Heart right ventricle (tissue), 16 donors: ENCODE measurements at regions of chr11 and their contacts with region 1.

Region 1: GRCh38 chr11:63838678-63839507 is at the start of gene MARK2:
- DNase-seq: peak; percentile 98 to 99
- ATAC-seq: peak; percentile 90 to 96 (median 94)
- H3K4me3 ChIP-seq: peak within 1 kb of the TSS; percentile 54 to 97 (median 92)
- H3K27ac ChIP-seq: peak within 1 kb of the TSS; percentile 70 to 95 (median 86)
- H3K4me1 ChIP-seq: peaks cover 17 to 59% (median 53%) of the 10 kb centered on the region in 9 donors
- H3K27me3 ChIP-seq: no peaks in the 10 kb centered on the region
- CTCF ChIP-seq: no peak
- total RNA-seq, gene MARK2: 33.8 to 42.7 (median 39.0) TPM

Region 2: GRCh38 chr11:63859011-63859550 is 20.2 kb after region 1 on chr11:
- intact Hi-C with region 1: no loop called
- DNase-seq: no peak
- ATAC-seq: peak in 4 of 8 donors; percentile 45 to 69 (median 59)
- H3K4me3 ChIP-seq: no peak overlapping the region
- H3K27ac ChIP-seq: peak overlapping the region in 7 of 10 donors; percentile 2 to 66 (median 37)
- H3K4me1 ChIP-seq: peaks cover 0 to 66% (median 25%) of the 10 kb centered on the region in 9 donors
- H3K27me3 ChIP-seq: no peaks in the 10 kb centered on the region
- CTCF ChIP-seq: no peak

Region 3: DNA sequence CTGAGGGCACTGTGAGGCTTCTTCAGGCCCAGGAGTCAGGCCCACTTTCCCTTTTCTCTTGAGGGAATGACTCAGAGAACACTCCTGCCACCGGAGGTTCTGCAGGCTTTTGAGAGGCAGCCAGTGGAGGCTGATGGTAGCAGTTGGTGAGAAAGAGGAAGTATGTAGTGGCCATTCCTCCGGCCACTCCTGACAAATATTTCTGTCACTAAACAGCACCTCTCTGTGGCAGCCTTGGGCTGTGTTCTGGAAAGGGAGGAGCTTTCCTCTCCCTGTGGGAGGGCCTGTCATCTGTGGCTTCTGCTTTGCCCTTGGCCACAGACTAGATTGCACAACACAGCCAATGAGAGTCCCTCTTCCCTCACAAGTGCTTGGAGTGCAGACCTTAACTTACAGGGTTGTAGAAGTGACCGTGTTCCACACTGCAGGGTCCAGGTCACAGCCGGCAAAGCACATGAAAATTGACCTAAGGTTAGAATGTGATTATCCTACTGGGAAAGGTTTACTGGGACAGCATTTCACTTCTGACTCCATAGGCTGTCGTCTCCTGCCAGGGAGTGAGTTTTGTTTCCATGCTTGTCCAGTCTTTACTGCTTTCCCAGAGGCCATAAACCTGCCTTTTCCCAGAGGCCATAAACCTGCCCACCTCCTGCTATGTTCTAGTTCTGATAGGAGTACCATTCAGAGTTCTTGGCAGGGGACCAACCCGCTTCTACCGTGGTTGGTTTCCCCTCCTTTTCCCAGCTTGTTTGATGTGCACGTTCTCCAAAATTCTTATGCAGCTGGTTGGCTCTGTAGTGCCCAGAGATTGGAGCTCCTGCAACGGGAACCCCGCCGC is 33.3 kb after region 1 on chr11:
- intact Hi-C with region 1: loop called in 7 of 10 experiments (anchors 1 to 5 kb)
- DNase-seq: peak; percentile 55 to 89
- ATAC-seq: peak; percentile 92 to 97 (median 96)
- H3K4me3 ChIP-seq: peak overlapping the region in 4 of 10 donors; percentile 5 to 27 (median 12)
- H3K27ac ChIP-seq: peak overlapping the region; percentile 25 to 90 (median 79)
- H3K4me1 ChIP-seq: peaks cover 35 to 97% (median 88%) of the 10 kb centered on the region in 9 donors
- H3K27me3 ChIP-seq: no peaks in the 10 kb centered on the region
- CTCF ChIP-seq: peak in 8 of 9 donors; percentile 30 to 78 (median 56)

Region 4: DNA sequence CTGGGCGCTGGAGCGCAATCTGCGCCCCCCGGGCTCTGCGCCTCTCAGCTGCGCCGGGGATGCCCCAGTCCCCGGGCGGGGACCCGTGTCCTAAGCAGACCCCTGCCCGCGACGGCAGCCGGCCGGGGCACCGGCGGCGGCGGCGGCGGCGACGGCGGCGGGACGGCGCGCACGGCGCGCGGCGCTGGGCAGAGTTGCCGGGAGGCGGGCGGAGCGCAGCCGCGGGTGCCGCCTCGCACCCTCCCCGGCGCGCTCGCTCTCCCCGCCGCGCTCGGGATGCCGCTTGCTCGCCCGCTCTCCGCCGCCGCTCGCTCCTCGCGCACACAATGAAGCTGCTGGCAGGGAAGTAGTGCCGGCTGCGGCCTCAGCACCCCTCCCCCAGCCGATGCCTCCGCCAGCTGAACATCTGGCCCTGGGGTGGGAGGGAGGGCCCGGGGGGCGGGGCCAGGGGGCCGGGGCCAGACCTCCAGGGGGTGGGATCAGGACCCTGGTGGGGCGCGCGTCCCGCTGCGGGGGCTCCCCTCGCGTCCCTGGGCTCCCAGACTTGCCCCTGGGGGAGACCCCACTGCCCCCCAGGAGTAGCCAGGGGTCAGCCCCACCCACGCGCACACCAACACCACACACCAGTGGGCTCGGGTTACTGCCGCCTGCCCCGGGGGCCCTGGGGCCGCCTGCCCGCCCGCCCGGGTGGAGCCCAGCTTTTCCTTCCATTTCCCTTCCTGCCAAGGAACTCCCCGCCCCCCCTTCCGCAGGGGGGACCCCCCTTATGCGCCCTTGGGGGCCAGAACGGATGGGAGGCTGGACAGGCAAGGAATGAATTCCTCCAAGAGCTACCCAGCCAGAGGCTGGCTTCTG is 78.2 kb after region 1 on chr11 and contains the start of gene RCOR2:
- intact Hi-C with region 1: loop called in 1 of 10 experiments (anchors 5 kb)
- DNase-seq: peak; percentile 83 to 86
- ATAC-seq: peak; percentile 24 to 50 (median 38)
- H3K4me3 ChIP-seq: peak within 1 kb of the TSS; percentile 39 to 67 (median 60)
- H3K27ac ChIP-seq: peak within 1 kb of the TSS; percentile 83 to 97 (median 94)
- H3K4me1 ChIP-seq: peaks cover 39 to 61% (median 54%) of the 10 kb centered on the region in 9 donors
- H3K27me3 ChIP-seq: peaks cover 0 to 47% (median 0%) of the 10 kb centered on the region in 7 donors
- CTCF ChIP-seq: no peak
- total RNA-seq, gene RCOR2: 1.1 to 8.4 (median 5.0) TPM

Region 5: DNA sequence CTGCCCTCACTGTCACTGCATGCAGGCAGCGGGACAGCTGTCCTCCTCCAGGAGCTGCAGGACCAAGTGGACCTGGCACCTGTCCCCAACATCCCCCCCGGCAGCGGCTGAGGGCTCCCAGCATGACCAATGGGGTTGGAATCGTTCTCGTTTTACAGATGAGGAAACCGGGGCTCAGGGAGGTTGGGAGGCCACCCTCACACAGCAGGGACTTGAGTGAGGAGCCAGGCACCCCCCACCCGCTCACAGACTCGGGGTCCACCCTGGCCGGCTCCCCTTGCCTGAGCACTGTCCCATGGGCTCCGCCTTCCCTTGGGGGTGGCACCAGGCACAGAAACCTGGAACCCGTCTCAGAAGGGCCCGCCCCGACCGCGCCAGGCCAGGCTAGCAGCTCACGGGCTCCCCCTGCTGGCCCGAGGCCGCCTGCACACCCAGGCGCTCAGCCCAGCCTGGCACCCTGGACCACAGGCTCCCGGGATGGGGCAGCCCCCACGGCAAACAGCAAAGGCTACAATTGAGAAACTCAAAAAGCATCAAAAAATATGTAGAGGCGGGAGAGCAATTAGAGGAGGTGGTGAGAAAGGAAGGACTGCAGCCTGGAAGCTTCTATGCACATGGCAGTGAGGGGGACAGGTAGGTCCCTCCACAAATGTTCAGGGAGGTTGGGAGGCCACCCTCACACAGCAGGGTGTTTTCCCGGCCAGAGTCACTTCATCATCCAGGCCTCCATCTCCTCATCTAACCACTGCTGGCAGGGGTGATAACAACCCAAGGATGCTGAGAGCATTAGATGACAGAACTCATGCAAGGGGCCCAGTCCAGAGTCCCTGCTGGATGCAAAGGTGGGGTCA is 314.2 kb after region 1 on chr11:
- intact Hi-C with region 1: loop called in 9 of 10 experiments (anchors 1 to 5 kb)
- DNase-seq: peak; percentile 37 to 72
- ATAC-seq: peak; percentile 24 to 62 (median 48)
- H3K4me3 ChIP-seq: peak overlapping the region in 1 of 10 donors; percentile 17
- H3K27ac ChIP-seq: no peak overlapping the region
- H3K4me1 ChIP-seq: peaks cover 8 to 70% (median 37%) of the 10 kb centered on the region in 9 donors
- H3K27me3 ChIP-seq: no peaks in the 10 kb centered on the region
- CTCF ChIP-seq: peak; percentile 99 to 100 (median 100)